Psoas muscle (tissue), 8 donors: ENCODE measurements at regions of chr4 and their contacts with region 1.

Region 1: DNA sequence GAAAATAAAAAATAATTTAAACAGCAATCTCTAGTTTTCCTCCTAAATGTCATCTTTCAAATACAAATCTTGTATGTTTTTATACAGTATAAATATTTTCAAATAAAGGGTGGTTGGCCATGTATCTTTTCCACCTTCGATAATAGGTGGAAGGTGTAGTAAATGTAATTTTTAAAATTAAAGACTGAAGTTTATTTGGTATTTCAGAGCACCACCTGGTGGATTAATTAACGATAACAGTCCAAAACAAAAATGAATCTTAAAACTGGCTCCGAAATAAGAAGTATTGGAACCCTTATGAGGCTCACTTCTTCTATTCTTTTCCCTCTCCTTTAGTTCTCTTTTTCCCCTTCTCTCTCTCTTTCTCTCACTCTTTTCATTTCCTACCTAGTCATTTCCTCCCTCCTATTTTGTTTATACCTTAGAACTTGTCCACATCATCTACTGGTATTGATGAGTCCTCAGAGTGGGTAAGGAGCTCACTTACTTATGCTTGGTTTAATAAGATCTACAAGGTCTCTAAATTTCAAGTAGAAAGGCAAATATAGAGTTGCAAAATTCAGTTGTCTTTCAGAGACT is 82.9 kb upstream of the EXOC1L start:
- DNase-seq: no peak
- ATAC-seq: no peak
- H3K4me3 ChIP-seq: no peak overlapping the region
- H3K27ac ChIP-seq: no peak overlapping the region
- H3K4me1 ChIP-seq: no peaks in the 10 kb centered on the region
- H3K27me3 ChIP-seq: peaks cover 0 to 2% (median 1%) of the 10 kb centered on the region in 3 donors
- CTCF ChIP-seq: no peak

Region 2: GRCh38 chr4:55312489-55313101 is 424.1 kb before region 1 on chr4:
- intact Hi-C with region 1: loop called in 1 of 2 experiments (anchors 10 kb)
- DNase-seq: no peak
- ATAC-seq: peak; percentile 23 to 68 (median 64)
- H3K4me3 ChIP-seq: no peak overlapping the region
- H3K27ac ChIP-seq: no peak overlapping the region
- H3K4me1 ChIP-seq: no peaks in the 10 kb centered on the region
- H3K27me3 ChIP-seq: no peaks in the 10 kb centered on the region
- CTCF ChIP-seq: peak; percentile 46

Region 3: DNA sequence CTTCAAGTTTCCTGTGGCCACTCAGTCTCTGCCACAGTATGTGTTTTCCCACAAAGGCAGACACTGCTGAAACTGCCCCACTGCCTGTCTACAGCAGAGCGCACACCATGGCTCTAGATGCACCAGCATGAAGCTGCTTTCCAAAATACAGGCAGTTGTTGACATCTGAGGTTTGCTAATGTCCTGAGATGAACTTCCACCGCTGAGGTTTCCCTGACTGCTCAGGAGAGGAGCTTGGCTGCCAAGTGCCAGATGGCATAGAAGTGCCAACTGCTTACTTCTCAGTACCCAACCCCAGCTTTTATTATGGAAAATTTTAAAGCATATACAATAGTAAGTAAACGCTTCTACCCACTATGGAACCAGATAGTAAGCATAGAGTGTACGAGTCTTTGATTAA is 21.9 kb after region 1 on chr4:
- intact Hi-C with region 1: no loop called
- DNase-seq: no peak
- ATAC-seq: peak in 1 of 4 donors; percentile 39
- H3K4me3 ChIP-seq: no peak overlapping the region
- H3K27ac ChIP-seq: no peak overlapping the region
- H3K4me1 ChIP-seq: peaks cover 6% of the 10 kb centered on the region
- H3K27me3 ChIP-seq: no peaks in the 10 kb centered on the region
- CTCF ChIP-seq: no peak